HEK293T (cell line): ENCODE measurements at regions of chr5 and their contacts with region 1.

Region 1: GRCh38 chr5:170791325-170791954 is 7.9 kb downstream of the GABRP start:
- DNase-seq: peak; percentile 83

Region 2: GRCh38 chr5:170070556-170071412 is 720.7 kb before region 1 on chr5:
- CTCF ChIA-PET with region 1: no interaction called
- POLR2A ChIA-PET with region 1: no interaction called
- DNase-seq: peak; percentile 66

Region 3: GRCh38 chr5:170638454-170639220 is 152.8 kb before region 1 on chr5:
- CTCF ChIA-PET with region 1: interaction called, 37 read pairs
- POLR2A ChIA-PET with region 1: no interaction called
- DNase-seq: peak; percentile 88

Region 4: GRCh38 chr5:170691657-170692056 is 99.8 kb before region 1 on chr5:
- CTCF ChIA-PET with region 1: interaction called, 11 read pairs
- POLR2A ChIA-PET with region 1: no interaction called
- DNase-seq: peak; percentile 41

Region 5: DNA sequence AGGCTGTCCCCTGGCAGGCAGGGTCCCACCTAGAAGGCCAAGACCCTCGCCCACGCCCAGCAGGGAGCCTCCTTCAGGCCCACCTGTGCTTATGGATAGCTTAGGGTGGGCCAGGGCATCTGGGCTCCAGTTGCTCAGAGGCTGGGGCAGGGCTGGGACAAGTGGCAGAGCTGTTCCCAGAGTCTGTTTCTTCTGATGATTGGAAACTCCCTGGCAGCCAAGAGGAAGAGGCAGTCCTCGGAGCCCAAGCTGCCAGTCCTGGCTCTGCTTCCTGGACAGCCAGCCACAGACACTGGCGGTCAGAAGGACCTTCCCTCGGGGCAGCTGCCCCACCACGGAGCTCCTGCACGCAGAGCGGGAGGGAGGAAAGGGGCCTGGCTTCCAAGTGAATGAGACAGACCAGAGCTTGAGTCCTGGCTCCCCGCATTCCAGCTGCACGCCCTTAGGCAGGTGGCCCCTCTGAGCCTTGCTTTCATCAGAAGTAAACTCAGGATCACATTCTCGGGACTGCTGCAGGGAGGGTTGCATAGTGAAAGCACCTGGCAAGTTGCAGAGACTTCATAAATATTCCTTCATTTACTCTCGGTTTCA is 45.9 kb before region 1 on chr5:
- CTCF ChIA-PET with region 1: interaction called, 54 read pairs
- POLR2A ChIA-PET with region 1: interaction called, 3 read pairs
- DNase-seq: no peak

Region 6: GRCh38 chr5:170880084-170880483 is 88.6 kb after region 1 on chr5:
- CTCF ChIA-PET with region 1: no interaction called
- POLR2A ChIA-PET with region 1: no interaction called
- DNase-seq: no peak

Region 7: GRCh38 chr5:170896779-170897178 is 105.3 kb after region 1 on chr5:
- CTCF ChIA-PET with region 1: no interaction called
- POLR2A ChIA-PET with region 1: no interaction called
- DNase-seq: peak; percentile 56

Region 8: GRCh38 chr5:170917113-170917512 is 125.7 kb after region 1 on chr5:
- CTCF ChIA-PET with region 1: no interaction called
- POLR2A ChIA-PET with region 1: no interaction called
- DNase-seq: no peak